Posterior cingulate gyrus (tissue), 11 donors: ENCODE measurements at regions of chr19 and their contacts with region 1.

Region 1: DNA sequence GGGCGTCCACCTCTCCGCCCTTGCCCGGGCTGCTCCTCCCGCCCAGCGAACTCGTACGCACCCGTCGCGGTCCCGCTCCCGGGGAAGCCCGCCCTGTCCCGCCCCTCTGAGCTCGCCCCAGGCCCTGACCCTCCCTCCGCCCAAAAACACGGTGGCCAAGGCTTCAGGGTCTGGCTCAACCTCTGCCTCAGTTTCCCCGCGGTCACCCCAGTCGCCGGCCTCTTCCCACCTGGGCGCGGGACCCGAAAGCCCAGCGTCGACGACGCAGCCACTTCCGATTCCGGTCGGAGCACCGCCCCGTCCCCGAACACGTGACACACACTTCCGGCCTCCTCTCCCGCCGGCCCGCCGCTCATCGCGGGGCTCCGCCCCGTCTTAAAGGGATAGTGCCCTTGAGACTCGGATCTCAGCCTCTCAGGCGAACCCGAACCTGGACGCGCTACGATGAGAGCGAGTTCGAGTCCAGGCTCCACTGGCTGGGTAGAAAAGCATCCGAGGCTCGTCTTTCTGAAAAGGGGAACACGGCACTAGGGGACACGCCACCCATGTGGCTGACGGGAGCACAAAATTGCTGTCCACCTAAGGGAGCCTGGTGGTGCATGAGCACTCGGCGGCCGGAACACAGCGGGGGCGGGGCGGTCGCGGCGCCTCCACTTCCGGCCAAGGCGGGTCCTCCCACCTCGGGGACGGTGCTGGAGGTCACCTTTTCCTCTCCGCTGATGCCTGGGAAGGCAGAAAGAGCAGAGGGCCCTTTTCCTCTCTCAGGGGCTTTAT is at the start of gene C19orf25:
- DNase-seq: peak; percentile 91 to 99 (median 96)

Region 2: DNA sequence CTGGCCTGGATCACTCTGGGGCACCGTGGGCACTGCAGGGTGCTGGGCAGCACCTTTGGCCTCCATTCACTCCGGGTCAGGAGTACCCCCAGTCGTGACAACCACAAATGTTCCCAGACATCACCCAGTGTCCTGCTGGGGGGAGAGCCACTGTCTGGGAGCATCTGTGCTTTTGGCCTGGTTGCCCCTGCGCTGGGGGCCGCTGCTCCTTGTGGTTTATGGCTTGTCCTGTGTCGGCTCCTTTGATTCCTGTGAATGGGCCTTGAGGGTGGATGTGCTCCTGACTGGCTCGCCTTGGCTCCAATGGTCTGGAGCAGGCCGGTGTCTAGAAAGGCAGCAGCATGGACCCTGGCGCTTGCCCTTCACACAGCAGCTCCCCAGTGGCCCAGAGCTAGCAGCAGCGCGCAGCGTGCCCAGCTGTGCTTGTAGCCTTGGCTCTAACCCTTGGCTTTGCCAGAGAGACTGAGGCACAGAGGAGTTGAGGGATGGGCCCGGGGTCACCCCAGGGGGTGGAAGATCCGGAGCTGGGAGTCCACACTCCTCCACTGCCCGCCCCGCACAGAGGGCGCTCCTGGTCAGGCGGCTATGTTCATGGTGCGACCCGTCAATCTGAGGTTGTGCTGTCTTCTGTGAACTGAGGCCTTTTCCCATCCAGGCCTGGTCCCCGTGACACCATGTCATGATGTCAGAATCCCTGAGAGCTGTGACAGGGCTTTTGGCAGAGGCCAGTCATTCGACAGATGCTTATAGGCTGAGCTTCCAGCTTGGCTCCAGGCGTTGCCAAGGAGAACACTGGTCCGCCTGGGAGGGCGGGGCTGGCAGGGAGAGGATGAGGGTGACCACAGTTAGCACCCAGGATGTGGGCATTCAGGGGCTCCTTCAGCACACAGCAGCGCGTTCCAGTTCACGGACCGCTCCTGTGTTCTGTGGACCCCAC is 67.6 kb before region 1 on chr19:
- intact Hi-C with region 1: no loop called
- DNase-seq: peak; percentile 77 to 99 (median 90)

Region 3: DNA sequence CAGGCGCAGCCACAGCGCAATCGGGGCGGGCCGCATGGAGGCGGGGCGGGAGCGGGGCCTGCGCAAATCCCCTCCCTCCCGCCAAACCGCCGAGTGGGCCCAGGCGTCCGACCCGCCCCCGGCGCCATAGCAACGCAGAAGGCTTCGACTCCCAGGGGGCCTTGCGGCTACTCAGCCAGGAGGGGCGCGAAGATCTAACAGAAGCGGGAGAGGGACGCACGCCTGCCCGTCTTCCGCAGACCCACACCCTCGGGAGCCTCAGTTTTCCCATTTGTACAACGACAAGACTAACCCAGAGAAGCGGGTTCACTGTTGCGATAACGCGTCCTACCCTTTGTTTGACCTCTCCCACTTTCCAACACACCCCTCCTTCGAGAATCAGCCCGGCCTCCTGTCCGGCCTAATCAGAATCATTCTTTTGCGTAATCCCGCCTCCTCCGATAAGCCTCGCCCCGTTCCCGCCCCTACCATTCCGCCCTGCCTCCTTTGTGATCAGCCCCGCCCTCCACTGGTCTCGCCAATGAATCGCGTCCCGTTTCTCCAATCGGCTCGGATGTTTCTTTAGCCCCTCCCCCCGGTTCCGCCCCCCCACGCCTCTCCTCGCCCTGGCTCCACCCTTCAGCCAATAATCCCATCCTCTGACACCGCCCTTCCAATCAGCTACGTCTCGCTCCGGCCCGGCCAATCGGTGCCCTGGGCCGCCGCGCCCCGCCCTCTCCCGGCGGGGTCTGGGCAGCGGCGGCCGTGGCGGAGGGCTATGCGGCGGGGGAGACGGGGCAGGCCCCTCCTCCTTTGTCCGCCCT is 11.4 kb after region 1 on chr19 and contains the start of gene PCSK4:
- intact Hi-C with region 1: loop called (anchors 1 kb)
- DNase-seq: peak; percentile 98 to 100 (median 99)

Region 4: DNA sequence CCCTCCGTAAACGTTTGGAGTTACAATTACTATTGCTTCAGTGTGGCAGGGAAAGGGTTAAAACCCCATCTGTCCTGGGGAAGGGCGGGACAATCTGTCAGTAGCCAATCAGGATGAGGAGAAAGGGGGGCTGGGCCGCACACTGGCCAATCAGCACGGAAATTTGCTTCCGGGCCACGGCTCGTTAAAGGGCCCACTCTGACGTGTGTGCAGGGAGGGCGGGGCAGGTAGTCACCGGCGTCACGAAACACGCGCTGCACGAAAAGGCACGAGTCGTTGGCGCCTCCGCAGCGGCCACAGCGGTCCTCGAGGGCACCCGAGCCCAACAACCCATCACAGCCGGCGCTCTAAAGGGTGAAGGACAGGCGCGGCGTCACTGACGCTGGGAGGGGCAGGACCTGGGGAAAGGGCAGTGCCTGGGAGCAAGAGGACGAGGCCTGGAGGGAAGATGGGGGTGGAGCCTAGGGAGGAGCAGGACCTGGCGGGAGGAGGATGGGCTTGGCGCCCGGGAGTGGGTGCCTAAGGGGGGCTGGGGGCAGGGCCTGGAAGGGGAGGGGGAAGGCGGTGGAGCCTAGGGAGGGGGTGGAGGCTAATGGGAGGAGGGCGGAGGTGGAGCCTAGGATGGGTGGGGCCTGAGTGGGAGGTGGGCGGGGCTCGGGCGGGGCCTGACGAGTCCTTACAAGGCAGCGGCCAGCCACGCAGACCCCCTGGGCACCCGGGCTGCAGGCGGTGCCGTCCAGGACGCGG is 28.8 kb after region 1 on chr19:
- intact Hi-C with region 1: loop called (anchors 1 kb)
- DNase-seq: peak; percentile 86 to 99 (median 92)